ENCODE measurements at regions of chr19 and their contacts with region 1.

Region 1: GRCh38 chr19:45558399-45558878 is 26.2 kb downstream of the OPA3 start:
- DNase-seq: peak; percentile 63
- H3K4me3 Mint-ChIP-seq: no peak overlapping the region
- H3K27ac Mint-ChIP-seq: no peak overlapping the region
- H3K4me1 Mint-ChIP-seq: peaks cover 9% of the 10 kb centered on the region
- H3K27me3 Mint-ChIP-seq: no peaks in the 10 kb centered on the region

Region 2: DNA sequence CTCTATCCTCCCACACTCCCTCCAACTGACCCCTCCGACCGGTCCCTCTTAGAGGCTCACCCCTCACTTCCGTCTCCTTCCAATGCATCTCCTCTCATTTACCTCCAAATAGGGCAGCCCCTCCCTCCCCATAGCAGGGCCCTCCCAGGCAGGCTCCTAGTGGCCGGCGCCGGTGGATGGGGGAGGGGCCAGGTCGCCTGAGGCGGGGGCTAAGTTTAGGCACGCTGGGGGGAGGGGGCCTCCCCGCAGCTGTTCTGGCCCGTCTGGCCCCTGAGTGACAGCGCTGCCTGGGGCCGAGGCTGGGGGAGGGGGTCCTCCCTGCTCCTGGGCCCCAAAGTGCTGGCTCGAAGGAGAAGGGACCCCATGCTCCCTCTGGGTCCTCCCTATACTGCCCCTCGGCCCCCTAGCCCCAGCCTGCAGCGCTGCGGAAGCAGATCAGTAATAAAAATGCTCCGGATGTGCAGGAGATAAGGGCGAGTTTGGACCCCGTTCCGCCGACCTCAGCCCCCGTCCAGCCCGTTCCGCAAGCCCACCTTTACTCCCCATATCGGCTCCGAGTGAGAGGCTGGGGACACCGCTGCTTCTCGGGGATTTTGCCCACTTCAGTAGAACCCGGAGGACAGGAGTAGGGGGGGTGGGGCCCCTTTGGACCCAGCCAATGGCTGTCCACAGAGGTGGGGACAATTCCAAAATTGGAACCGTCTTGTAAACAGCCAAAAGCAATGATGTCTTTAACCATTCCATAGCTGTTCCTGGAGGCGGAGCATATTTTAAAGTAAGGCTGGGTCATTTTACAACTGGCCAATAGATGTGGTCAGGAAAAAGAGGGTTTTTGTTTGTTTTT is 65.6 kb before region 1 on chr19:
- intact Hi-C with region 1: loop called (anchors 2 kb)
- DNase-seq: no peak
- H3K4me3 Mint-ChIP-seq: peak overlapping the region; percentile 76
- H3K27ac Mint-ChIP-seq: peak overlapping the region; percentile 39
- H3K4me1 Mint-ChIP-seq: peaks cover 24% of the 10 kb centered on the region
- H3K27me3 Mint-ChIP-seq: peaks cover 15% of the 10 kb centered on the region

Region 3: GRCh38 chr19:45523642-45524256 is 34.7 kb before region 1 on chr19:
- intact Hi-C with region 1: loop called (anchors 1 kb)
- DNase-seq: peak; percentile 69
- H3K4me3 Mint-ChIP-seq: no peak overlapping the region
- H3K27ac Mint-ChIP-seq: peak overlapping the region; percentile 24
- H3K4me1 Mint-ChIP-seq: peaks cover 16% of the 10 kb centered on the region
- H3K27me3 Mint-ChIP-seq: no peaks in the 10 kb centered on the region

Region 4: DNA sequence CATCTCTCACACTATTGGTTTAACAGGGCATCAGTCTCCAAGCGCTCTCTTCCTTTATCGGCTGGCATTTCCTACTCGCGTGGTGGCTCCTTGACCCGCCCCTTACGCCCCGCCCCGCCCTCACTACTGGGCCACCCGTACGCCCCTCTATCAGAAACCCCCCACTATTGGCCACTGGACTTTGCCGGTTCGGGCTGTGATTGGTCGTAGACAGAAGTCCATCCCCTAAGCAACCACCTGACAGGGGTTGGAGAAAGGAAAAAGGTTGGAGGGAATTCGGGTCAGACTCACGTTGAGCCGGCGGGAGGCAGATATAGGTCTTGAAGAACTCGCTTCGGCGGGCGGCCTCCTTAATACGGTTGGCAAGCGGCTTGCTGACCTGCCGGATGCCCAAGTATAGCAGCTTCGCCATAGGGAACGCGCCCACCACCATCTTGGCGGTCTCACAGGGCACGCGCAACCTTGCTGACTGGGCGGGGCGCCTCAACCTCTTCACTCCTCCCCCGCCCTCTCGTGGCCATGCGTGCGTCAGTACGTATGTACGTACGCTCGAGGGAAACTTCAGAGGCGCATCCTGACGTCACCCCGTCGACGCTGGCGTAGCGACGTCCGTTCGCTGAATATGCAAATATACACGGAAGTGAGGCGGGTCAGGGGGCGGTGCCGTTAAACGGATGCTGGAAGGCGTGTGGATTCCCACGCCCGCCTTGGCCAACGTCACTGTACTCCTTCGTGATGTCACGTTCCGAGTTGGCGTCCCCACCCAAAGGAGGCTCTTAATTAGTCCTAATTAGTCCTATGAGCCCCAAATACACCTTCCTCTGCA is 26.1 kb after region 1 on chr19 and contains the start of gene OPA3:
- intact Hi-C with region 1: no loop called
- DNase-seq: peak; percentile 98
- H3K4me3 Mint-ChIP-seq: peak within 1 kb of the TSS; percentile 89
- H3K27ac Mint-ChIP-seq: peak within 1 kb of the TSS; percentile 97
- H3K4me1 Mint-ChIP-seq: peaks cover 9% of the 10 kb centered on the region
- H3K27me3 Mint-ChIP-seq: peaks cover under 1% of the 10 kb centered on the region
- total RNA-seq, gene OPA3: 15.2 and 15.9 TPM in 2 replicates

Measured in activated T-helper 2 cell treated with anti-CD3 and anti-CD28 coated beads, Interferon-gamma antibody, Interleukin-2, Interleukin-4, amounts not matched to agents 10 μg/mL and 5 μg/mL and 100 μg/mL, durations not matched to agents 14 hours and 24 hours and 36 hours (primary cell).